Sigmoid colon (tissue), 7 donors: ENCODE measurements at regions of chr6 and their contacts with region 1.

Region 1: GRCh38 chr6:31139599-31139998 is 733 bp upstream of the PSORS1C2 start:
- DNase-seq: no peak
- H3K4me3 ChIP-seq: no peak overlapping the region
- H3K27ac ChIP-seq: no peak overlapping the region
- H3K4me1 ChIP-seq: peaks cover 0 to 23% (median 12%) of the 10 kb centered on the region in 4 donors
- H3K27me3 ChIP-seq: no peaks in the 10 kb centered on the region
- CTCF ChIP-seq: no peak
- EP300 ChIP-seq: no peak
- POLR2A ChIP-seq: no peak

Region 2: GRCh38 chr6:30998785-30999184 is 140.8 kb before region 1 on chr6:
- intact Hi-C with region 1: no loop called
- DNase-seq: no peak
- H3K4me3 ChIP-seq: no peak overlapping the region
- H3K27ac ChIP-seq: no peak overlapping the region
- H3K4me1 ChIP-seq: no peaks in the 10 kb centered on the region
- H3K27me3 ChIP-seq: no peaks in the 10 kb centered on the region
- CTCF ChIP-seq: no peak
- EP300 ChIP-seq: no peak
- POLR2A ChIP-seq: no peak

Region 3: DNA sequence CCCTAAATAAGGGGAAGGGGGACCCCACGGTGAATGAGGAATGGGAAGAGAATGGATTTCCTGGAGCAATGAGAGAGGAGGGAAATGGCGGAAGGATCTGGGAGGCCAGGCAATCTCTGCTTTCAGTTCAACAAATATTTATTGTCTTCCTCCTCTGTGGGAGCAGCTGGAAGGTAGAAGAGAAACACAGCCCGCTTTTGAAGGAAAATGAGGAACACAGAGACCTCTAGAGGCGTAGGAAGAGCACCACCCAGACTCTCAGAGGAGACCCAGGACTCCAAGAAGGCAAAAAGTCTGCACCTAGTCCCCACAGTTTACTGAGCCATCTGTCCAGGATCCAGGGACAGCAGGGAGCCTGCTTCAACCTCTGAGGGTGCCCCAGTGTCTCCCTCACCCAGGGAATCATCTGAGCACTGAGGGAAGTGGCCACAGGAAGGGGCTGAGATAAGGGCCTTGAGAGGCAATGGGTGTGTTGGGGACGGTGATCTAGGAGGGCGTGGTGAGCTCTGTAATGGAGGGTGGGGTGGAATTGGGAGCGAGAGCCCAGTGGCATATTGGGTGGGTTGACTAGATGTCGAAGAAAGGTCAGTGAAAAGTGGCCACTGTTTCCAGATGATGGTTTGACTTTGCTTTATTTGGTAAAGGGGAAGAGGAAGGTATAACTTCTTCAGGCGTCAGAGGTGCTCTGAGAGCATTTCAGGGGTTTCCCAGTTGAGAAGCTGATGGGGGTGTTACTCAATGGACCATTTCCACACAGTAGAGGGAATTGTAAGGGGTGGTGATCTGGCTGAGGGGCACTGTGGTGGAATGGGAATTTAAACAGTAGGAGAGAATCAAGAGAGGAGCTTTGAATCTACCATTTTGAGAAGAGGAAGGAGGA is 24.4 kb before region 1 on chr6:
- intact Hi-C with region 1: no loop called
- DNase-seq: no peak
- H3K4me3 ChIP-seq: peak overlapping the region; percentile 6 to 35 (median 30)
- H3K27ac ChIP-seq: peak overlapping the region; percentile 59 to 78 (median 68)
- H3K4me1 ChIP-seq: peaks cover 0 to 42% (median 31%) of the 10 kb centered on the region in 4 donors
- H3K27me3 ChIP-seq: no peaks in the 10 kb centered on the region
- CTCF ChIP-seq: no peak
- EP300 ChIP-seq: no peak
- POLR2A ChIP-seq: no peak

Region 4: GRCh38 chr6:31366693-31367470 is 227.3 kb after region 1 on chr6:
- intact Hi-C with region 1: loop called (anchors 1 kb)
- DNase-seq: peak; percentile 94
- H3K4me3 ChIP-seq: peak overlapping the region in 3 of 4 donors; percentile 23 to 32 (median 32)
- H3K27ac ChIP-seq: no peak overlapping the region
- H3K4me1 ChIP-seq: peaks cover 0 to 4% (median 2%) of the 10 kb centered on the region in 4 donors
- H3K27me3 ChIP-seq: peaks cover 0 to 11% (median 0%) of the 10 kb centered on the region in 3 donors
- CTCF ChIP-seq: peak; percentile 90 to 96 (median 93)
- EP300 ChIP-seq: no peak
- POLR2A ChIP-seq: no peak